ENCODE measurements at regions of chr12 and their contacts with region 1.

Region 1: DNA sequence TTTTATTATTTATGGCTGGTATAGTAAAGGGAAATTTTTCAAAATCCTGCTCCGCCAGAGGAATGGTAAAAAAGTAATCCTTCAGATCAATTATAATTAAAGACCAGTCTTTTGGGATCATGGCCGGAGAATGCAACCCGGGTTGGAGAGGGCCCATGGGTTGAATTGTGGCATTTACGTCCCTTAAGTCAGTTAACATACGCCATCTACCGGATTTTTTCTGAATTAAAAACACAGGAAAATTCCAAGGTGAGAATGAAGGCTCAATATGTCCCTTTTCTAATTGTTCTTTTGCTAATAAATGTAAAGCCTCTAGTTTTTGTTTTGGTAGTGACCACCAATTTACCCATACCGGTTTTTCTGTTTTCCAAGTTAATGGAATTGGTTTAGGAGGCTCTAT is 602.8 kb downstream of the ALG10 start:
- DNase-seq: peak; percentile 37
- H3K4me3 Mint-ChIP-seq: no peak overlapping the region
- H3K27ac Mint-ChIP-seq: no peak overlapping the region
- H3K4me1 Mint-ChIP-seq: no peaks in the 10 kb centered on the region
- H3K27me3 Mint-ChIP-seq: no peaks in the 10 kb centered on the region
- CTCF ChIP-seq: peak; percentile 37

Region 2: DNA sequence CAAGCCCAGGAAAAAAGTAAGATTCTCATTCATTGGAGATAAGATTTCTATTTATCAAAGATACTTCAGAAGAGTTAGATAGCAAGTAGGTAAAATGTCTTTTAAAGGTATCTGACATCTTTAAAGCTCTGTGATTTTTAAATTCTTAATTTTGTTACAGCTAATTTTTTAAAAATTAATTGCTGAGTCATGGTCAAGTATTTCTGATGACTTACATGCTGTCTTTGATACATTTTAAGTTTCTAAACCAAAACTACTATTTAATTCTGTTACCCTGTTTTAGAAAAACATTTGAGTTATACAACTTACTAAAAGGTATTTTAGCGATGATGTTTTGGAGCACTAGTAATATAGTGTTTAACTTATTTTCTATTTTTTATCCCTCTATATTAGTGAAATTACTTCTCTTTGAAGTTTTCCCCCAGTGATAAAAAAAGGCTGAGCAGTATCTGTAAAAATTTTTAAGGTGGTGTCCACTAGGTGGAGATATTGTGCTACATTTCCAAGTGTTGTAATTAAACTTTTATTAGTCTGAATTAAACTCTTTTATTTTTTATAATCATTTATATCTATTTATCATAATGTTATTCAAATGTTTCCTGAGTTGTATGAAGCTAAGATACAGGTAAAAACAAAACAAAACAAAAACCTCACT is 591.4 kb before region 1 on chr12:
- CTCF ChIA-PET with region 1: interaction called, 5 read pairs
- POLR2A ChIA-PET with region 1: no interaction called
- intact Hi-C with region 1: loop called (anchors 1 kb)
- DNase-seq: peak; percentile 39
- H3K4me3 Mint-ChIP-seq: no peak overlapping the region
- H3K27ac Mint-ChIP-seq: no peak overlapping the region
- H3K4me1 Mint-ChIP-seq: no peaks in the 10 kb centered on the region
- H3K27me3 Mint-ChIP-seq: no peaks in the 10 kb centered on the region
- CTCF ChIP-seq: peak; percentile 58

Region 3: DNA sequence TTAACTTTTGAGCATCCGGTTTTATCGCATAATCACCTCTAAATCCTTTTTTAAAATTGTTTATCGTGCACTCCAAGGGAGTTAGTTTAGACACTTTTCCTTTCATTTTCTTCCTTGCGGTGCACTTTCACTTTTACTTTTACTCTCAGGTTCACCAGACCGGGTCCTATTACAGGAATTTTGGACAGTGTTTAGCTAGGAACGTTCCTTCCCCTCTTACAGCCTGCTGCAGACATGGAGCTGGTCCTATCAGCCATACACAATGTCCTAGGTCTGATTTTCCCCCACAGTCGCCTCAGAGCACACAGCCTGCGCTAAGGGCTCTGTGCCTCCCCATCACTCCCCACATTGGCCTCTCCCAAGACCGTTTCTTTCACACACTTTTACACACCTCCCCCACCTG is 498.9 kb before region 1 on chr12:
- CTCF ChIA-PET with region 1: interaction called, 6 read pairs
- POLR2A ChIA-PET with region 1: no interaction called
- intact Hi-C with region 1: loop called (anchors 1 kb)
- DNase-seq: no peak
- H3K4me3 Mint-ChIP-seq: peak overlapping the region; percentile 31
- H3K27ac Mint-ChIP-seq: peak overlapping the region; percentile 24
- H3K4me1 Mint-ChIP-seq: peaks cover 7% of the 10 kb centered on the region
- H3K27me3 Mint-ChIP-seq: no peaks in the 10 kb centered on the region
- CTCF ChIP-seq: no peak

Region 4: GRCh38 chr12:34347367-34347766 is 277.7 kb before region 1 on chr12:
- CTCF ChIA-PET with region 1: no interaction called
- POLR2A ChIA-PET with region 1: no interaction called
- intact Hi-C with region 1: no loop called
- DNase-seq: no peak
- H3K4me3 Mint-ChIP-seq: no peak overlapping the region
- H3K27ac Mint-ChIP-seq: no peak overlapping the region
- H3K4me1 Mint-ChIP-seq: no peaks in the 10 kb centered on the region
- H3K27me3 Mint-ChIP-seq: no peaks in the 10 kb centered on the region
- CTCF ChIP-seq: no peak

Measured in MCF 10A (cell line).